Left cardiac atrium (tissue), 4 donors: ENCODE measurements at regions of chr2 and their contacts with region 1.

Region 1: DNA sequence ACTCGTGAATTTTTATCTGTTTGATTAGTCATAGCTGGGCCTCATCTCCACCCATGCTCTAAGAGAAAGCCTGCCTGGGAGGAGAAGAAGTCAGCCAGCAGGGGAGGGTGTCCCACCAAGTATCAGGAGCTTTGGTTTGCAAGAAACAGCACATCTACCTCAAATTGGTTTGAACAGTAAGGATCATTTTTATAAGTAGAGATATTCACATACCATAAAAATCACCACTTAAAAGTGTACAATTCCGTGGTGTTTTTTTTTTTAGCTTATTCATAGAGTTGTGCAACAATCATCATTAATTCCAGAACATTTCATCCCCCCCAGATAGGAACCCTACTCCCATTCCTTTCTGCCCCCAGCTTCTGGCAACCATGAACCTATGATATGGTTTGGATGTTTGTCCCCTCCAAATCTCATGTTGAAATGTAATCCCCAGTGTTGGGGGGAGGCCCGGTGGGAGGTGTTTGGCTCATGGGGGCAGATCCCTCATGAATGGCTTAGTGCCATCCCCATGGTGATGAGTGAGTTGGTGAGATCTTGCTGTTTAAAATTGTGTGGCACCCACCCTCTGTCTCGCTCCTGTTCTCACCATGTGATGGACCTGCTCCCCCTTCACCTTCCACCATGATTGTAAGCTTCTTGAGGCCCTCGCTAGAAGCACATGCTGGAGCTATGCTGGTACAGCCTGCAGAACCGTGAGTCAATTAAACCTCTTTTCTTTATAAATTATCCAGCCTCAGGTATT is 36.2 kb upstream of the HS6ST1 start:
- DNase-seq: no peak
- ATAC-seq: no peak

Region 2: DNA sequence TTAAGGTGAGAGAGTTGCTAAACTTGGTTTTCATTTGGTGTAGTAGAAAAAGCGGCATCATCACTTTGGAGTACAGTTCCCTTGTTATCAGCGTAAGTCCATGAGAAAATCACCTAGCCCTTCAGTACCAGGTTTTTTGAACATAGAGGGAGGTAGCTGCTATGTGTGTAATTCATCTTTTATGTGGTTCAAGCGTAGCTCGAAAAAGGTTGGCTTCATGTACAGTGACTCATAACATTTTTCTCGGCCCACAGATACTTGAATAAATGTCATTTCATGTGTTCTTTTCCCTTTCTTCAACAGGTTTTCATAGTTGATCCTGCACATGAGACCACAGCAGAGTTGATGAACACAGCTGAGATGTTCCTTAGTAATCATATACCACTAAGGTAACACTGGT is 220.3 kb before region 1 on chr2:
- intact Hi-C with region 1: no loop called
- DNase-seq: no peak
- ATAC-seq: no peak

Region 3: DNA sequence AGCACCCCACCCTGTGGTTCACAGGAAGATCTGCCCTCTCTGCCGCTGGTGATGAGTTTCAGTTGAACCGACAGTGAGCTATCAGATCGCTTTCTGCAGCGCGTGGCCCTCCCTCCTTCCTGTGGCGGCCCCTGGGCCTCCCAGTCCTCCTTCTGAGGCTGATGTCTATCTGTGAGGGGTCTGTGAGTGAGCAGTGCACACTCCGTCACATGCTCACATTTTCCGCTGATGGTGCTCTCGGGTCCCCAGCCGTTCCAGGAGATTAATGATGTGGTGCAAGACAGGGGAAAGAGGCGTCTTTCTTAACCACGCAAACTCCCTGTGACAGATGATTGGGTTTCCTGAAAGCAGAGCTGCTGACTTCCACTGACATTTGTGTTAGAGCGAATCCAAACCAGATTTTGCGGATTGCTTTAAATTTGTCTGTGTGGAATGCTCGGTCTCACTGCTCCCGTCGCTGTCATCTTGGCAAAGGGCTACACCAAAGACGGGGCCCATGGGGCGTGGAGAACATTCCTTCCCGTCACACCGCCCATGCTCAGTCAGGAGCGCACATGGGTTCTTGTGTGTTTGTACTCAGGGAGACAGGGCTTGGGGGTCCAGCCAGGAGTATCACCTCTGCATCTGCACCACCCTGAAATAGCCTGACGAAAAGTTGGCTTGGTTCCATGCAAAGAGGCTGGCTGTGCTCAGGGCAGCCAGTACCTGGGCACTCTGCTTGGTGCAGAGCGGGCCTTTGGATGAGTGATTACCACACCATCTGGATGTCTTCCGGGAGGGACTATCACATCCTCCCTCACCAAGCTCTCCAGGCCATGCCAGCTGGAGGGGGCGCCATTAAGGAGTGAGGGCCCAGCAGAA is 118.5 kb after region 1 on chr2:
- intact Hi-C with region 1: loop called in 1 of 2 experiments (anchors 10 kb)
- DNase-seq: peak; percentile 52
- ATAC-seq: peak; percentile 66 to 78

Region 4: GRCh38 chr2:129923265-129924091 is 1568.6 kb after region 1 on chr2:
- intact Hi-C with region 1: loop called in 1 of 2 experiments (anchors 10 kb)
- DNase-seq: no peak
- ATAC-seq: peak; percentile 47 to 68